ENCODE measurements at regions of chr10 and their contacts with region 1.

Region 1: GRCh38 chr10:15433850-15434537 is 62.9 kb upstream of the FAM171A1 start:
- DNase-seq: peak; percentile 66
- CTCF ChIP-seq: peak; percentile 69

Region 2: DNA sequence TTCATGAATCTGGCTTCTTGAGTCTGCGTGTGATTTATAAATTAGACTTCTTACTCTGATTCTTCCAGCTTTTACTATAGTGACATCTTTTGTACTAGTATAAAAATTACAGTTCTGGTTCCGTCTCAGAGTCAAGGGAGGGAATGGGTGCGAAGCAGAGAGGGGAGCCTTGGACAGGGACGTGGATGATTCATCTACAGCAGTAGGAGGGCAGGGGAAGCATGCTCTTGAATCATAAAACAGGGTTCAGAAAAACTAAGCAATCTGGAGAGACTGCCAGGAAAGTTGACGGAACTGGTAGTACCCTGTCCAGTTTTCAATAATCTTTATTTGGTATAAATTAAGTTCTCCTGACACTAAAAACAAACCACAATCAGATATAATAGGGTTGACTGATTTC is 227.6 kb after region 1 on chr10:
- in situ Hi-C with region 1: no loop called
- DNase-seq: no peak
- CTCF ChIP-seq: no peak

Region 3: DNA sequence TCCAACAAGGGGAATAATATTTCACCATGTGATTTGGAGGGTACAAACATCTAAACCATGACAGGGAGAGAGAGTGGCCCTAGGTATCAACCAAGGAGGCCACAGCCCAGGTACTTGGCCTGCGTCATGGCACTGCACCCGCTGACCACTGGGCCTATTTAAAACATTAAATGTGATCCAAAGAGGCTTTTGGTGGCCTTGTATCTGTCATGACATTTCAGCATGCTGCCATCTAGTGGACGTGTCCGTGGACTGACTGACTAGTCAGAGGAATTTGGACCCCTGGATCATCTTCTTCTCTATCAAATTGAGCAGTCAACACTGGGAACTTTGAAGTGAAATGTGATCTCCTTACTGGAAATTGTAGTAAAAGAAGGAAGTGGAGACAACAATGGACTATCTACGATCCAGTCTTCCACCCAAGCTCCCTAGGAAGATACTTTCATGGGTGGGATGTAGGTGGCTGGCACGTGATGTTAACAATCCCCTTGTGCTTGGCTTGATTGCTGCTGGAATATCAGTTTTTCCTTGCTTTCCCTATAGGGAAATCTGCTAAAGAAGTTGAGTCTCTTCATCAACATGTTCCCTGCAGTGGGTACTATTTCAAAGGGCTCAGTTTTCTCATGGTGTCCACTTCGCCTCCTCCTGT is 310.3 kb after region 1 on chr10:
- in situ Hi-C with region 1: loop called (anchors 25 kb)
- DNase-seq: peak; percentile 44
- CTCF ChIP-seq: peak; percentile 72

Measured in GM13977 (cell line).